Dorsolateral prefrontal cortex (tissue), 120 donors: ENCODE measurements at regions of chr17 and their contacts with region 1.

Region 1: DNA sequence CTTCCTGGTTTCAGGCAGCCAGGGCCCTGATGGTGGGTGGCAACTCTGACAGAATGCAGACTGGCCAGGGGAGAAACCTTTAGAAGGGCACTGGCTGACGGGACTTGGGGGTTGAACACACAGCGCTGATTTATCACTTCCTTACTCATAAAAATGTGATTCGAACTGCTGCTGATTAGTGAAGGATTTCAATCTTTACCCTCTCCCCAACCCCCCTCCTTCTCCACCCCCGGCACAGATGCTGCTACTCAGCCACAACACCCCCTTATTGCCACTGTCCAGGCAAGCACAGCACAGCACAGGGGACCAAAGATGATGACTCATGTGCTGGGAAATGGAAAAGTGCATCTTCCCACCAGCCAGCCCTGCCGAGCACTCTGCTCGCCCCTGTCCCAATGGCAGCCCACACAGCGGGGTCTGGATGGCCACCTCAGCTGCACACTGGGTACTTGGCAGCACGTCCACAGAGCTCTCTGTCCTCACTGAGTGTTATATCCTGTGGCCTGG is 70.1 kb downstream of the SMG6 start:
- DNase-seq: peak in 4 of 10 donors; percentile 23 to 74 (median 40)
- H3K4me3 ChIP-seq: no peak overlapping the region
- H3K27ac ChIP-seq: peak overlapping the region in 32 of 59 donors; percentile 9 to 85 (median 44)
- H3K27me3 ChIP-seq: no peaks in the 10 kb centered on the region
- CTCF ChIP-seq: no peak

Region 2: GRCh38 chr17:2122641-2123302 is 110.7 kb before region 1 on chr17:
- intact Hi-C with region 1: loop called in 1 of 2 experiments (anchors 5 kb)
- DNase-seq: peak in 7 of 10 donors; percentile 11 to 54 (median 48)
- H3K4me3 ChIP-seq: peak overlapping the region in 31 of 59 donors; percentile 3 to 50 (median 20)
- H3K27ac ChIP-seq: peak overlapping the region in 44 of 59 donors; percentile 3 to 84 (median 57)
- H3K27me3 ChIP-seq: no peaks in the 10 kb centered on the region
- CTCF ChIP-seq: peak in 28 of 56 donors; percentile 9 to 42 (median 24)

Region 3: GRCh38 chr17:2484876-2485275 is 251.4 kb after region 1 on chr17:
- intact Hi-C with region 1: no loop called
- DNase-seq: peak in 1 of 10 donors; percentile 5
- H3K4me3 ChIP-seq: no peak overlapping the region
- H3K27ac ChIP-seq: peak overlapping the region in 21 of 59 donors; percentile 8 to 96 (median 38)
- H3K27me3 ChIP-seq: no peaks in the 10 kb centered on the region
- CTCF ChIP-seq: no peak